Activated CD8-positive, alpha-beta T cell treated with anti-CD3 and anti-CD28 coated beads, Interleukin-2, amount 10 ng/mL, durations not matched to agents 7 days and 5 days (primary cell): ENCODE measurements at regions of chr6 and their contacts with region 1.

Region 1: DNA sequence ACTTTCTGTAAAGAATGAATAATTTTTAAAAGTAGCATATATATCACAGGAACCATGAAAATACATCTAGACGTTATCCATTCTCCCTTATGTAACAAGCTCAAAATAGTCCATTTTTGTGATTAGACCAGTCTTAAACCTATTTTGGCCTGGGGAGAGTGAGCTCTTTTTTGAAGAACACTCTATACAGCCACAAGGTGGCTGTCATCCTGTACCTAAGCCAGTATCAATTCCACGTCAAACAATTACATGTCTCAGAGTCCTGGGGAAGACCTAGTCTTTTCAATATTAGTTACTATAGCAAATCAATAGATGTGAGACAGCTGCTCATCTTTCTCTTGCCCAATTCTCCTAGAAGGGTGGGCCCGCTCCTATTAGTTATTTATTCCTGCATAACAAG is 28.4 kb downstream of the FBXO5 start:
- DNase-seq: no peak
- ATAC-seq: no peak
- H3K4me3 Mint-ChIP-seq: no peak overlapping the region
- H3K27ac Mint-ChIP-seq: no peak overlapping the region
- H3K4me1 Mint-ChIP-seq: no peaks in the 10 kb centered on the region
- H3K27me3 Mint-ChIP-seq: peaks cover 5% of the 10 kb centered on the region

Region 2: DNA sequence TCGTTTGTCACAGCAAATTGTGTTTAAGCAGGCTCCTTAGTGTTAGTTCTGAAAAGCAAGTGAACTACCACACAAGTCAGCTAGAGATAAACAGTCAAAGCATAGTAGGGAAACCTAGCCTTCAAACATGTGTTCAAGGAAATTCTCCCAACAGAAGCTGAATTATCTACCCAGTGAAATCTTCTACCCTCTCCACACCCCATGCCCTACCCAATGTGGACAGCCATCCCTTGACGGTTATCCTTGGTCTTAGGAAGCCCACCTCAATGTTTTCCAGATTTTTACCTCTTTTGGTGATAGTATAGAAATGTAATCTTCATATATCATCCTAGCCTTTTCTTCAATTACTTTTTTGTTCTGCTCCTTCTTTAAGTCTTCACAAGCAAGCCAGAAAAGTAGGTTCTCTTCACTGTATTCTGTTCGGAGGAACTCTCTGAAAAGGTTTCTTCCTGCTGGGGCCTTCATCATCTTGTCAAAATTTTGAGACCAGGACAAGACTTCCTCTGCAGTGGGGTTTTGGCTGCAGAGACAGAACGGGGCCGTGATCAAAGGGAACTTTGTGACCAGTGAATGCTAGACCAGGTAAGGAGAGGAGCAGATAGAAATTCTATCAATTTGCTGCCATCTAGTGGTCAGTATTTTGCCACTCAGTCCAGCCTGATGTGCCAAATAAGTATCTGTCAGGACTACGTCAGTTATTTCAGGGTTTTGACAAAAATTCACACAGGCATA is 69.7 kb after region 1 on chr6:
- CTCF ChIA-PET with region 1: interaction called, 17 read pairs
- POLR2A ChIA-PET with region 1: no interaction called
- DNase-seq: peak; percentile 63
- ATAC-seq: peak; percentile 99
- H3K4me3 Mint-ChIP-seq: no peak overlapping the region
- H3K27ac Mint-ChIP-seq: no peak overlapping the region
- H3K4me1 Mint-ChIP-seq: no peaks in the 10 kb centered on the region
- H3K27me3 Mint-ChIP-seq: peaks cover 13% of the 10 kb centered on the region

Region 3: GRCh38 chr6:153090241-153090930 is 135.9 kb after region 1 on chr6:
- CTCF ChIA-PET with region 1: no interaction called
- POLR2A ChIA-PET with region 1: no interaction called
- DNase-seq: no peak
- ATAC-seq: no peak
- H3K4me3 Mint-ChIP-seq: no peak overlapping the region
- H3K27ac Mint-ChIP-seq: no peak overlapping the region
- H3K4me1 Mint-ChIP-seq: no peaks in the 10 kb centered on the region
- H3K27me3 Mint-ChIP-seq: no peaks in the 10 kb centered on the region